ENCODE measurements at regions of chr4 and their contacts with region 1.

Region 1: DNA sequence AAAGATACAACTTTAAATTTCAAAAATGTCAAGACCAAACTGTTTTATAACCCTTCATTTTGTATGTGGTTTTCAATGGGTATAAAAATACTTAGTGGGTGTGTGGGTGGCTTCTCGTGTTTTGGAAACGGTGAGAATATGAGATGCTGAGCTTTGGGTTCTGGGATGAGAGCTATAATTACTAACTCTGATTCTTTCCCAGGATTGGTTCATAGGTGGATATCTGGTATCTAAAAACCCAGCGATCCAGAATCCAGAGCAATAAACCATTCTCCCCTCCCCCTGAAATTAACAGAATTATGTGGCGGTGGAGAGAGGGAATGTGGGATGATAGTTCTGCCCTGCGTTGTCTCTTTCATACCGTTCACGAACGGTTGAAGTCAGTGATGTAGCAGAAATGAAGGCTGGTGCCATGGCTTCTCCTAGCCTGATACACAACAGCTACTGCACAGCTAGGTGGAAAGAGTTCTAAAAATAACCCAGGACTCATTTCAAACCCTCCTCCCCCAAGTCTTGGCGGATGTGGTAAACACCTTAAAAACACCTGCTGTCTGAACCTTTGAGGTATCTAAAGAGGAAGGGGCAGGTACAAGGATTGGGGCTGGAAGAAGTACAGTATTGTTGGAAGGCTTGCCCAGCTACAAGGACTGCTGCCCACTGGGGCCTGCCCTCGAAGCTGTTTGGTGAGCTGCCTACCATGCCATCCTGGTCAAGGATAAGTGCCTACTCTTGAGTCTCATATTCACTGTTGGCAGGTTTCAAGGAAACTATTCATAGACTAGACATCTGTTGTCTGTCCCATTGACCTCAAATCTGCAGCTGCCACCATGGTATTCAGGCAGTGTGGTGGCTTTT is 44.5 kb downstream of the SEPTIN11 start:
- DNase-seq: peak; percentile 60
- CTCF ChIP-seq: no peak

Region 2: GRCh38 chr4:77007358-77008191 is 13.6 kb after region 1 on chr4:
- CTCF ChIA-PET with region 1: interaction called, 60 read pairs
- POLR2A ChIA-PET with region 1: no interaction called
- DNase-seq: peak; percentile 29
- CTCF ChIP-seq: no peak

Region 3: DNA sequence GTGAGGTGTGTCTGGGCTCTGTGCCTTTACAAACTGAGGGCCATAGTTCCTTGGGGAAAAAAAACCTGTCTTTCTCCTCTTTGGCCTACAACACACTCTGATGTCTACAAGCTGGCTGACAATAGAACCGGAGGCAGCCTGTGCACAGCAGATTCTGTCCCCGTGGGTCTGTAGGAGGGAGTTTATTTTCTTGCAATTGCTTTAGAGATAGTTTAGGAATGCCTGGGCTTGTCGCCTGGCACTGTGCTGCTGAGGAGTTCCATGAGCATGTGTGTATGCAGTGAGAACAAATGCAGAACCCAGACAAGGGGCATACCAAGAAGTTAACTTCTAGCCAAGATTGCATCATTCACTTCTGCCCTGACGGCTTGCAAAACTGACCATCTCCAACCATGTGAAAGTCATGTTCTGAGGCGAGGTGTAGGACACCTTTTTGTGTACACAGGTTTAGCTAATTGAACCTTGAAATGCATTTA is 27.6 kb after region 1 on chr4:
- CTCF ChIA-PET with region 1: interaction called, 10 read pairs
- POLR2A ChIA-PET with region 1: no interaction called
- DNase-seq: no peak
- CTCF ChIP-seq: no peak